ENCODE measurements at regions of chr12 and their contacts with region 1.

Region 1: DNA sequence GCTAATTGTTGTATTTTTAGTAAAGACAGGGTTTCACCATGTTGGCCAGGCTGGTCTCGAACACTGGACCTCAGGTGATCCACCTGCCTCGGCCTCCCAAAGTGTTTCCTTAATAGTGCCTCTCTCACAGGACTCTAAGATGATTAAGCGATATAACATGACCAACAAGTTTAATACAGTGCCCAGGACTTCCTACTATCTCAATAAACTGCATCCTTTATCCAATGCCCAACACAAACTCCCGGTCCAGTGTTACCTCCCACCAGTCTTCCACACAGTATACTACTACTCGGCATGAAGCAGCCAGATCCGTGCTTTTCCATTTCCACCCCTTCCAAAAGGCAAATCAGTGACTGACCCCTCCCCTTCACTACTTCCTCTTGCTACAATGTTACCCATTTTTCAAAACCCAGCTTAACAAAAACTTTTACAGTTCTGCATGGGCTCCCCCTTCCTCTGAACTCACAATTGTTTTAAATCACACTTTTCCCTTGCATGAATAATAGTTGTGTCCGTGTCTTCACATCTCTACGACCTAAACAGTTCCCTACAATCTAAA is 900 bp downstream of the NOP2 start:
- DNase-seq: no peak
- H3K4me3 ChIP-seq: peak overlapping the region in 2 of 3 donors; percentile 38 to 76
- H3K27ac ChIP-seq: peak overlapping the region in 1 of 3 donors; percentile 72
- H3K4me1 ChIP-seq: peaks cover 10 to 15% of the 10 kb centered on the region in 2 donors
- H3K27me3 ChIP-seq: no peaks in the 10 kb centered on the region
- CTCF ChIP-seq: no peak
- POLR2A ChIP-seq: no peak

Region 2: GRCh38 chr12:6603095-6603567 is 35.9 kb after region 1 on chr12:
- intact Hi-C with region 1: loop called (anchors 5 kb)
- DNase-seq: peak; percentile 20 to 24
- H3K4me3 ChIP-seq: no peak overlapping the region
- H3K27ac ChIP-seq: peak overlapping the region in 2 of 3 donors; percentile 4 to 73
- H3K4me1 ChIP-seq: peaks cover 33 to 36% of the 10 kb centered on the region in 2 donors
- H3K27me3 ChIP-seq: no peaks in the 10 kb centered on the region
- CTCF ChIP-seq: no peak
- POLR2A ChIP-seq: no peak